Posterior vena cava (tissue), 2 donors: ENCODE measurements at regions of chr3 and their contacts with region 1.

Region 1: DNA sequence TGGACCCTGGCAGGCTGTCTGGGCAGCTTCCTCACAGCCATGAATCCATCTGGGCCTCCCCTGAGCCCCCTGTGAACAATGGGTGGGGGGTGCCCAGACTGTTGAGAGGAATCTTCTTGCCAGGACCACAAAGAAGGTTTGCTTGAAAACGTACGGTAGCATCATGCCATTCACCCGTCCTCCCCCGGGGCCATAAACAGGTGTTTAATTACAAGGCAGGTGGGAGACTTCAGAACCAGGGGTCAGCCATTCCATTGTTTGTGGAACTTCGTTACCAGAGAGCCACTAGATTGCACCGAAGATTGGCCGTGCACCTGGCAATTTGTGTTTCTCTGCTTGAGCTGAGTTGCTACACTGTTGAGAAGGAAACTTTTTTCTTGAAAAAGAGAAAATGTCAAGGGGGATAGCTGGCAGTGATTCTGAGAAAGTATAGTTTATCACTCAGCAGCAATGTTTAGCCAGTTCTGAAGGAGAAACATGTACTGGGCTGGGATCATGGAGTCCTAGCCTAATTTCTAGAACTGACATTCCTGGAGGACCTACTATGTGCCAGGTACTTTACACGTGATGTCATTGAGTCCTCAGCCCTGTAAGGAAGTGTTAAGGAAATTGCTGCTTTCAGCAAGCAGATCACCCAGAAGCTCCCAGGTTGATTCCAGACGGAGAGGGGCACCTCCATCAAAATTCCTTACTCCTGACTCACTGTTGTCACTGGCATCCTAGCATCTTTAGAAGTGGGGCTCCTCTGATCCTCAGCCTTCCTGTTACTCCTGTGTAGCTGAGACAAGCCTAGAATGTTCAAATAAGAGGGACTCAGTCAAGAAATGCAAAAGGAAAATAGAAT is 103.8 kb upstream of the UBE2E1 start:
- DNase-seq: no peak

Region 2: GRCh38 chr3:23653647-23654525 is 48.1 kb before region 1 on chr3:
- intact Hi-C with region 1: loop called in 1 of 2 experiments (anchors 2 kb)
- DNase-seq: no peak